ENCODE measurements at regions of chr15 and their contacts with region 1.

Region 1: GRCh38 chr15:93141371-93141794 is 52.4 kb upstream of the RGMA start:
- DNase-seq: no peak
- ATAC-seq: no peak
- H3K4me3 ChIP-seq: no peak overlapping the region
- H3K27ac ChIP-seq: no peak overlapping the region
- H3K4me1 ChIP-seq: peaks cover 4% of the 10 kb centered on the region
- H3K27me3 ChIP-seq: no peaks in the 10 kb centered on the region
- CTCF ChIP-seq: no peak

Region 2: DNA sequence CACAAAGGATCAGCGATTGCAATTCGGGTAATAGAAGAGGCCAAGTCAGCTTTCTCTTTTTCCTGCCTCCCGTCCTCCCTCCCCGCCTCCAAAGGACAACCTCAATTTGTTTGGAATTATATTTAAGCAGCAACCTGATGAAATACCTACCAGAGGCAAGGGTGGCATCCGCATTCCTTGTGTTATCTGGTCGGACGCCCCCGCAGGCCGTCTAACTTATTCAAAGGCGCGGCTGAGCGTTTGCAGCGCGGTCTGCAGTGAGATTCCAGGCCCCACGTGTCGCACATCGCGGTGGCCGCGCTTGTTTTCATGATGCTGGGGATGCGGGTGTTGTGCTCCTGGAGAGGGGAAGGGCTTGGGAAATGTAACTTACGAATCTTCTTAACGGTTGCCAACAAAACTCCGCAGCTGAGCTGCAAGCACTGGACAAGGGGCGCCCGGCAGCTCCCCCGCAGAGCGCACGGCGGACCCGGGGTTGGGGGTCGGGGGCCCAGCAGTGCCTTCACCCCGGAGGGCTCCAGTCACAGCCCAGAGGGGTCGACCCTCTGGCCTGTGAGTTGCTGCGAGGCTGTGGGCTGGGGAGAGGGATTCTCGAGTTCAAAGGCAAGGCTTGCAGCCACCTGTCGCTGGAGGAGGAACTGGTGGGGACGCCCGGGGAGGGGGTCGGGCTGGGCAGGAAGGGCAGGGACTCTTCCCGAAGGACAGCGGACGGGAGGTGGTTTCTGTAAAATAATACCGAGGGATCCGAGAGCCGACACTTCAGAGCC is 31.9 kb before region 1 on chr15:
- intact Hi-C with region 1: loop called in 1 of 2 experiments (anchors 5 kb)
- DNase-seq: peak in 1 of 2 donors; percentile 30
- ATAC-seq: no peak
- H3K4me3 ChIP-seq: no peak overlapping the region
- H3K27ac ChIP-seq: no peak overlapping the region
- H3K4me1 ChIP-seq: peaks cover 6% of the 10 kb centered on the region
- H3K27me3 ChIP-seq: no peaks in the 10 kb centered on the region
- CTCF ChIP-seq: no peak

Region 3: GRCh38 chr15:93195930-93196586 is 54.7 kb after region 1 on chr15:
- intact Hi-C with region 1: no loop called
- DNase-seq: no peak
- ATAC-seq: no peak
- H3K4me3 ChIP-seq: no peak overlapping the region
- H3K27ac ChIP-seq: no peak overlapping the region
- H3K4me1 ChIP-seq: no peaks in the 10 kb centered on the region
- H3K27me3 ChIP-seq: no peaks in the 10 kb centered on the region
- CTCF ChIP-seq: no peak

Measured in psoas muscle (tissue), 8 donors.